ENCODE measurements at regions of chr7 and their contacts with region 1.

Region 1: DNA sequence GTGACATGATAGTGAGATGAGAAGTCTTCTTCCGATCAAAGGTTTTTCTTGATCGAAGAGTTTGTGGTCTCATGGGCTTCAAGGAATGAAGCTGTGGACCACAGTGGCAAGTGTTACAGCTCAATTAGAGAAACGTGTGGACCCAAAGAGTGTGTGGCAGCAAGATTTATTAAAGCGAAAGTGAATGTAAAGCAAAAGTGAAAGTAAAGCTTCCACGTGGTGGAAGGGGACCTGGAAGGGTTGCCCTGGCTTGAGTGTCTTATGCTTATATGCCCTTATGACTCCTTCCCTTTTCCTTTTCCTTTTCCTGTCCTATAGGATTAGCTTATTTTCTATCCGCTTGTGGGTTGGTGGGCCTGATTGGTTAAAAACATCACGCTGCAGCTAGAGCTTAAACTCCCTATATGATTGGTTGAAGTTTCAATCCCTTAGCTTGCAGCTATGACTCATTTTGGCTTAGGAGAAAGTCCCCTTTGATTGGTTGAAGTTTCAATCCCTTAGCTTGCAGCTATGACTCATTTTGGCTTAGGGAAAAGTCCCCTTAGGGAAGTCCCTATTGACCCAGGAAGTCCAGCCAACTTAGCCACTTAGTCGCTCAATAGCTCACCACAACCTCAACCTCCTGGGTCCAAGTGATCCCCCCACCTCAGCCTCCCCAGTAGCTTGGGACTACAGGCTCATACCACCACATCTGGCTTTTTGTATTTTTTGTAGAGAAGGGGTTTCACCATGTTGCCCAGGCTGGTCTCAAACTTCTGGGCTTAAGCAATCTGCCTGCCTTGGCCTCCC is 34.7 kb downstream of the MRPS24 start:
- DNase-seq: no peak
- ATAC-seq: no peak
- H3K4me3 ChIP-seq: peak overlapping the region; percentile 7 to 34; a peak in 3 of 4 replicates
- H3K27ac ChIP-seq: peak overlapping the region; percentile 71
- H3K4me1 ChIP-seq: no peaks in the 10 kb centered on the region
- H3K27me3 ChIP-seq: no peaks in the 10 kb centered on the region
- CTCF ChIP-seq: no peak

Region 2: DNA sequence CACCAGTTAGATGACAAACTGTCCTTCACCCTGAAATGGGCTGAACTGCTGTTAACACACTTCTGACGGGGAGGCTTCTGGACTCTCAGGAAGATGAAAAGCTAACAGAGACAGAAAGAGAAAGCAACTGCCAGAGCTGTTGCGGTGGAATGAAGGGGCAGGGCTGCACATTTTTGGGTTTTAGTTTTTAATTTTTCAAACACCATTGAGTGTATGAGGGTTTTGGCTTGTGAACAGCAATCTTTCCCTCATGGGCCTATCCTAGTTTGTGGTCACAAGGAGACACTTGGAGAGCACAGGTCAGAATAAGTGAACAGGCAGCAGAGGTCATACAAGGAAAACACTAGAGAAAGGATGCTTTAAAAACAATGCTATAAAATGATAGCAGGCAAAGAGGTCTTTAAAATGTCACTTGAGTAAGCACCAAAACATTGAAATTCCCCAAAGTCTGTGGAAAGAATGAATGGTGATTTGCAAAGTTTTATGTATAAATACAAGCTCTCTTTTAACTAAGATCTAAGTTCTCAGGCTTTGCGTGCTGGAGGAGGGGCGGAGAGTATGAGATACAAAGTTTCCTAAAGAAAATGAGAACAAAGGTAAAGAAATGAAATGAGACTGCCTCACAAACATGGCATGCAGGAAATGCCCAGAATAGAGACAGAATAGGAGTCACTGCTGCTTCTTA is 1496.3 kb before region 1 on chr7:
- CTCF ChIA-PET with region 1: no interaction called
- POLR2A ChIA-PET with region 1: no interaction called
- in situ Hi-C with region 1: no loop called
- intact Hi-C with region 1: no loop called
- DNase-seq: no peak
- ATAC-seq: no peak
- H3K4me3 ChIP-seq: no peak overlapping the region
- H3K27ac ChIP-seq: no peak overlapping the region
- H3K4me1 ChIP-seq: no peaks in the 10 kb centered on the region
- H3K27me3 ChIP-seq: no peaks in the 10 kb centered on the region
- CTCF ChIP-seq: no peak

Region 3: GRCh38 chr7:42940985-42941847 is 893.4 kb before region 1 on chr7:
- CTCF ChIA-PET with region 1: no interaction called
- POLR2A ChIA-PET with region 1: no interaction called
- in situ Hi-C with region 1: no loop called
- intact Hi-C with region 1: no loop called
- DNase-seq: peak; percentile 66
- ATAC-seq: peak; percentile 93
- H3K4me3 ChIP-seq: no peak overlapping the region
- H3K27ac ChIP-seq: no peak overlapping the region
- H3K4me1 ChIP-seq: no peaks in the 10 kb centered on the region
- H3K27me3 ChIP-seq: no peaks in the 10 kb centered on the region; the same call in 1 of the 2 replicates
- CTCF ChIP-seq: peak; percentile 97

Region 4: GRCh38 chr7:43537765-43538403 is 296.8 kb before region 1 on chr7:
- CTCF ChIA-PET with region 1: no interaction called
- POLR2A ChIA-PET with region 1: no interaction called
- in situ Hi-C with region 1: no loop called
- intact Hi-C with region 1: no loop called
- DNase-seq: no peak
- ATAC-seq: no peak
- H3K4me3 ChIP-seq: no peak overlapping the region
- H3K27ac ChIP-seq: no peak overlapping the region
- H3K4me1 ChIP-seq: no peaks in the 10 kb centered on the region
- H3K27me3 ChIP-seq: peaks cover 9% of the 10 kb centered on the region
- CTCF ChIP-seq: no peak

Region 5: GRCh38 chr7:43729214-43729923 is 105.3 kb before region 1 on chr7 and contains the start of gene COA1:
- CTCF ChIA-PET with region 1: no interaction called
- POLR2A ChIA-PET with region 1: no interaction called
- in situ Hi-C with region 1: no loop called
- intact Hi-C with region 1: loop called (anchors 5 kb)
- DNase-seq: peak; percentile 88
- ATAC-seq: peak; percentile 100
- H3K4me3 ChIP-seq: peak within 1 kb of the TSS; percentile 63 to 99
- H3K27ac ChIP-seq: peak within 1 kb of the TSS; percentile 92
- H3K4me1 ChIP-seq: peaks cover 13% of the 10 kb centered on the region
- H3K27me3 ChIP-seq: no peaks in the 10 kb centered on the region
- CTCF ChIP-seq: no peak
- total RNA-seq, gene COA1: 65.5 TPM

Region 6: DNA sequence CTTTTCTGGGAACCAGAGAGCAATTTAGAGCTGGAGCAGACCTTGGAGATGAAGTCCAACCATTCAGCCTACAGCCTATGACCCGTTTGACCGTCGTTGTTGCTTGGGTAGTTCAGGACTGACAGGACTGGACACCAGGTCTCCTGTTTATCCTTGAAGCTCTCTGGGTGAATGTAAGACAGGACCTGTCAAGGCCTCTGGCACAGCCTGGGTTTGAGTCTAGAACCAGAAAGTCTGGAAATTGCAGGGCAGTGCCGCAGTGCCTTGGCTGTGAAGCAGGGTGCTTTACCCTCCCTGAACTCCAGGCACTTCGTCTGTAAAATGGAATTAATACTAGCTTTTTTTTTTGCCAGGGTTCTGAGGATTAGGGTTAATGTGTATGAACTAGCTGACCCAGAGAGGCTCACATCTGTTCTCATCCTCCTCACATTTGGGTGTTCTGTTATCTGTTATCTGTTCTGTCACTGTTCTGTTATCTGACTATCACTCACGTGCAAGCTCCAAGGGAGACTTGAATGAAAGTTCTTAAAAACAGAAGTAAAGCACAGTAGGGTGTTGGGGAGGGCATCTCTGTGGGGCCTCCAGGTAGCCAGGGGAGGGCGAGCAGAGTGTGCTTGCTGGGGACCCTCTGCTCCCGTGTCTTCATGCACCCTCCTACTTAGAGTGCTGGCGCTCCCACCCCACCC is 66.3 kb before region 1 on chr7:
- CTCF ChIA-PET with region 1: no interaction called
- POLR2A ChIA-PET with region 1: no interaction called
- in situ Hi-C with region 1: no loop called
- intact Hi-C with region 1: no loop called
- DNase-seq: no peak
- ATAC-seq: no peak
- H3K4me3 ChIP-seq: no peak overlapping the region
- H3K27ac ChIP-seq: no peak overlapping the region
- H3K4me1 ChIP-seq: peaks cover 31% of the 10 kb centered on the region
- H3K27me3 ChIP-seq: no peaks in the 10 kb centered on the region
- CTCF ChIP-seq: no peak

Measured in Panc1 (cell line).